CD8-positive, alpha-beta T cell (primary cell): ENCODE measurements at regions of chr6 and their contacts with region 1.

Region 1: GRCh38 chr6:111462770-111463391 is 20.1 kb downstream of the REV3L start:
- DNase-seq: peak in 1 of 9 experiments; percentile 15
- ATAC-seq: no peak
- H3K4me3 ChIP-seq: no peak overlapping the region
- H3K4me3 Mint-ChIP-seq: no peak overlapping the region
- H3K27ac ChIP-seq: no peak overlapping the region
- H3K27ac Mint-ChIP-seq: peak overlapping the region; percentile 63
- H3K4me1 ChIP-seq: peaks cover 13% of the 10 kb centered on the region
- H3K4me1 Mint-ChIP-seq: peaks cover 33% of the 10 kb centered on the region
- H3K27me3 ChIP-seq: no peaks in the 10 kb centered on the region
- H3K27me3 Mint-ChIP-seq: no peaks in the 10 kb centered on the region
- CTCF ChIP-seq: no peak

Region 2: DNA sequence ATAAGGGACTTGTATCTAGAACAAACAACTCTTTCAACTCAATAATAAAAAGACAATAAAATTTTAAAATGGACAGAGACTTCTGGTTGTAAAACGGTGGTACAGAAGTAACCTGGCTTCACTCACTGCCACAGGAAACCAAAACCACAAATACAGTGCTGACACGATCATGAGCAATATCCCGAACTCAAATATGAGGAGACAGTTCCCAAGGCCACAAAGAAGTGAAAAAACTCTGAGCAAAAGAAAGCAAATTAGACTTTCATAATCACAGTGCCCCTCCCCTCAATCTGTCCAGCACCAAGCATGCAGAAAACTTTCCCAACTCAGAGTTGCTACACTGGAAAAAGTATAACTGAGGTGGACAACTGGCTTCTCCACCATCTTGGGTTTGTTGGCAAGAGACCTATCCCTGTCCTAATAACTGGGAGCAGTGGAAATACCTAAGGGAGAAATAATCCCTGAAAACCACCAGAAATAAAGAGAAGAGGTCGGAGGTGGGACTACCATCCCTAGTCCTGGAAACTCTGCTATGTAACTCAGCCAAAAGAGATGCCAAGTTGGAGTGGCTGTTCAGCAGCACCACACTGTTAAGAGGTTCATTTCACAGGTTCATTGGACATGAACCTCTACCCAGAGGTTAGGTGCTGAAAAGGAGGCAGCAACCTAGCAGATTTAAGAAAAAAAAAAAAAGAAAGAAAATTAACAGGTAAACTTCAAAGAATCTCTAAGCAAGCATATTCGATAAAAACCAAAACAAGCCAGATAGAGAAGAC is 35.4 kb before region 1 on chr6:
- CTCF ChIA-PET with region 1: no interaction called
- POLR2A ChIA-PET with region 1: no interaction called
- intact Hi-C with region 1: loop called in 1 of 2 experiments (anchors 5 kb)
- DNase-seq: peak in 3 of 9 experiments; percentile 17 to 49 (median 23)
- ATAC-seq: peak; percentile 51
- H3K4me3 ChIP-seq: no peak overlapping the region
- H3K4me3 Mint-ChIP-seq: peak overlapping the region; percentile 62
- H3K27ac ChIP-seq: no peak overlapping the region
- H3K27ac Mint-ChIP-seq: no peak overlapping the region
- H3K4me1 ChIP-seq: peaks cover 6% of the 10 kb centered on the region
- H3K4me1 Mint-ChIP-seq: peaks cover 57% of the 10 kb centered on the region
- H3K27me3 ChIP-seq: no peaks in the 10 kb centered on the region
- H3K27me3 Mint-ChIP-seq: no peaks in the 10 kb centered on the region
- CTCF ChIP-seq: no peak

Region 3: DNA sequence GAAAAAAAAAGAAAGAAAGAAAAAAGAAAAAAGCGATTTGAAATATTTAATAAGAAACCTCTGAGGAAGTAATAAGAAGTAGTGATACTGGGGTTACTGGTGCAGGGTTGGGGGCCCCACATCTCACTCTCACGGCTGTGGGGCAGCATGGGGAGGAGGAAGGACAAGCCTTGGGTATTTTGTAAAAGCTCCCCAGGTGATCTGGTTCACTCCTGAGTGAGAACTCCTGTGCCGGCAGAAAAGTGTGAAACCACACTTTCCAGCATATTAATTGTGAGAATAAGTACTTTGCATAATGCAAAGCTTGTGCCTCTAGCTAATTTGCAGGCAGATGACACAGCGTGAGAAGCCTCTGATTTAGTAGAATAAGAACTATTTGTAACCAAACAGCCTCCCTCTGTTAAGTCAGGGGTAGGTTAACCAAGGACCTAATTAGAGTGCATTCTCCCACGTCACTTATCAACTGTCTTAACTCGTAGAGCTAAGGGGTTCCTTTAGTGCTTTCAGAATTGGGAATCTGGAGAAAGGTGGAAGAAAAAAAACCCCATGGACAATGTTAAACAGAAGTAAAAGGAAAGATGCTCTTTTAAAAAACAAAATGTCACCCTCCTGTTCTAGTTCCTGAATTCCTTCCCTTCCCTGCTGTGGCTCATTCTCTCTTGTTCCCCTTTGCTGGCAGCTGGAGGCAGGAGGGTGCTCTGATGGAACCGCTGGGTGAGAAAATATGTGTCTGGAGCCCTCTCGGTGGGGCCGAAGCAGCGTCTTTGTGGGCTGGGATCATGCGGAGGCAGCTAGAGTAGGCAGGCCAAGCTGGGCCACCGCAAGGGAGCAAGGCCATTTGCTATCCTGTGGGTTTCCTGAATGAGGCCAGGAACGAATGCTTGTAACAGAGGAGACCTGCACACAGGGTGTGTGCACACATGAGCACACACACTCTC is 301.6 kb after region 1 on chr6:
- CTCF ChIA-PET with region 1: no interaction called
- POLR2A ChIA-PET with region 1: no interaction called
- intact Hi-C with region 1: no loop called
- DNase-seq: peak in 7 of 9 experiments; percentile 45 to 92 (median 70)
- ATAC-seq: peak; percentile 41
- H3K4me3 ChIP-seq: peak overlapping the region in 1 of 2 experiments; percentile 4
- H3K4me3 Mint-ChIP-seq: peak overlapping the region; percentile 70
- H3K27ac ChIP-seq: peak overlapping the region; percentile 41 to 99
- H3K27ac Mint-ChIP-seq: peak overlapping the region; percentile 99
- H3K4me1 ChIP-seq: peaks cover 98% of the 10 kb centered on the region
- H3K4me1 Mint-ChIP-seq: peaks cover 99% of the 10 kb centered on the region
- H3K27me3 ChIP-seq: no peaks in the 10 kb centered on the region
- H3K27me3 Mint-ChIP-seq: no peaks in the 10 kb centered on the region
- CTCF ChIP-seq: no peak